Panc1 (cell line): ENCODE measurements at regions of chr18 and their contacts with region 1.

Region 1: DNA sequence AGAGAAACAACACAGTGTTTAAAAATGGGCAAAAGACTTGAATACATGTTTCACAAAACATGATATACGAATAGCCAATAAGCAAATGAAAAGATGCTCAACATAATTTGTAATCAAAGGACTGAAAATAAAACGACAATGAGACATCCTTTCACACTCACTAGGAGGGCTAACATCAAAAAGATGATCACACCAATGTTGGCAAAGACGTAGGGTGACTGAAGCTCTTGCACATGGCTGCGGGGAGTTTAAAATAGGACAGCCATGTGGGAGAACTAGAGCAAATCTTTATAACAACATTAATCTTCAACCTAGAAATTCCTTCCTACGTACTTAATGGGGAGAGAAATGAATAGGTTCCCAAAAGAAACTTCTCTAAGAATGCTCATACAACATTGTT is 19.2 kb upstream of the SEH1L start:
- DNase-seq: no peak
- ATAC-seq: no peak
- H3K4me3 ChIP-seq: no peak overlapping the region
- H3K27ac ChIP-seq: no peak overlapping the region
- H3K4me1 ChIP-seq: no peaks in the 10 kb centered on the region
- H3K27me3 ChIP-seq: no peaks in the 10 kb centered on the region
- CTCF ChIP-seq: no peak

Region 2: GRCh38 chr18:12711446-12711845 is 217.2 kb before region 1 on chr18:
- CTCF ChIA-PET with region 1: interaction called, 11 read pairs
- POLR2A ChIA-PET with region 1: no interaction called
- in situ Hi-C with region 1: no loop called
- intact Hi-C with region 1: no loop called
- DNase-seq: no peak
- ATAC-seq: no peak
- H3K4me3 ChIP-seq: no peak overlapping the region
- H3K27ac ChIP-seq: no peak overlapping the region
- H3K4me1 ChIP-seq: no peaks in the 10 kb centered on the region
- H3K27me3 ChIP-seq: no peaks in the 10 kb centered on the region
- CTCF ChIP-seq: no peak